Sigmoid colon (tissue), 7 donors: ENCODE measurements at regions of chr22 and their contacts with region 1.

Region 1: DNA sequence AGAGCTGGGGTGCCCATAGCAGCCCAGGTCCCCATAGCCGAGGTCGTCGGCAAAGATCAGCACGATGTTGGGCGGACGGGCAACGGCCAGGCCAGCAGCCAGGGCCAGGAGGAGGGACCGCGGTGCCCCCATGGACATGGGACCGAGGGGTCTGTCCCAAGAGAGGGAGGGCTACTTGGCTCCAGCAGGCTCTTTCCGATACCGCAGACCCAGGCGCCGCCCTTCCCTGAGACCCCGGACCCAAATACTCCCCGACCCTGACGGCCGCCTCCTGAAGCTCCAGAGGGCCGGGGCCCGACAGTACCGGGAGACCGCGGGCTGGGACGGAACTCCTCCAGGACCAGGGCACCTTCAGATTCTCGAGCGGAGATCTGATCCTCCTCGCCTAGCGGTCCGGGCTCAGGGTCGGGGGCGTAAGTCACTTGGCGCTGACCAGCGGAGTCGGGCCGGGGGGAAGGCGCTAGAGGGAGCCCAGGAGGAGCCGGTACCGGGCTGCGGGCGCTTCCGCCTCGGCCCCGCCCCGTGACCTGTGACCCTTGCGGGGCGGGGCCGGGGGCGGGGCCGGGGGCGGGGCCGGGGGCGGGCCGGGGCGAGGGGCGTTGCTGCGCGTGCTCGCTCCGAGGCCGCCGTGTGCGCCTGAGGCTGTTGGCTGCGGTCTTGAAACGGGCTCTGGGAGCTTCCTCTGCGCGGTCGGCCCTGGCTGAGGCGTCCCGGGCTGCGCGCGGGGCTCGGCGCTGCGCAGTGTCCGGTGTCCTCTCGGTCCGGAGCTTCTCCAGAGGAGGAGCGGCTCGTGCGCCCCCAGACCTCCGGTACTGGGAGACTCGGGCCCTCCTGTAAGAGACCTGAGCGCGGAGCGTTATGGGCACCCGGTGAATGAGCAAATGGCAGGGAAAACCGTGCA is at the start of gene ARSA:
- DNase-seq: peak; percentile 92
- H3K4me3 ChIP-seq: peak within 1 kb of the TSS; percentile 57 to 81 (median 76)
- H3K27ac ChIP-seq: peak within 1 kb of the TSS; percentile 76 to 84 (median 82)
- H3K4me1 ChIP-seq: peaks cover 0 to 20% (median 15%) of the 10 kb centered on the region in 4 donors
- H3K27me3 ChIP-seq: no peaks in the 10 kb centered on the region
- CTCF ChIP-seq: peak in 1 of 4 experiments; percentile 11
- EP300 ChIP-seq: no peak
- POLR2A ChIP-seq: peak in 1 of 2 donors; percentile 11
- total RNA-seq, gene ARSA: 19.3 to 26.3 (median 23.8) TPM

Region 2: GRCh38 chr22:50244420-50245213 is 383.3 kb before region 1 on chr22 and contains the start of gene TUBGCP6:
- intact Hi-C with region 1: loop called (anchors 5 kb)
- DNase-seq: peak; percentile 98
- H3K4me3 ChIP-seq: peak within 1 kb of the TSS; percentile 84 to 94 (median 89)
- H3K27ac ChIP-seq: peak within 1 kb of the TSS; percentile 92 to 97 (median 96)
- H3K4me1 ChIP-seq: peaks cover 3 to 67% (median 46%) of the 10 kb centered on the region in 4 donors
- H3K27me3 ChIP-seq: no peaks in the 10 kb centered on the region
- CTCF ChIP-seq: peak in 3 of 4 experiments; percentile 18 to 29 (median 21)
- EP300 ChIP-seq: peak in 1 of 4 donors; percentile 73
- POLR2A ChIP-seq: peak; percentile 83 to 87
- total RNA-seq, gene TUBGCP6: 23.5 to 67.0 (median 28.2) TPM

Region 3: DNA sequence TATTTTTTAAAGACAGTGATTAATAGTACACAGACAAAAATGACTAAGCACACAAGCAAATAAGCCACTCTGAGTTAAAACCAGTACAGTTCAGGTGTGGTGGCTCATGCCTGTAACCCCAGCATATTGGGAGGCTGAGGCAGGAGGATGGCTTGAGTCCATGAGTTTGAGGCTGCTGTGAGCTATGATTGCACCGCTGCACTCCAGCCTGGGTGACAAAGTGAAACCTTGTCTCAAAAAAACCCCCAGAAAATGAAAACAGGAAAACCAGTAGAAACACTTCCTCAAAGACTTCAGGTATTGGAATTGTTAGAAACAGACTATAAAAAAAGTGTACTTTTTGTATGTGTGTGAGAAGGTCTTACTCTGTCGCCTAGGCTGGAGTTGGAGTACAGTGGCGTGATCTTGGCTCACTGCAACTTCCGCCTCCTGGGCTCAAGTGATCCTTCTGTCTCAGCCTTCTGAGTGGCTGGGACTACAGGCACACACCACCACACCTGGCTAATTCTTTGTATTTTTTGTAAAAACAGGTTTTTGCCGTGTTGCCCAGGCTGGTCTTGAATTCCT is 251.7 kb before region 1 on chr22:
- intact Hi-C with region 1: no loop called
- DNase-seq: no peak
- H3K4me3 ChIP-seq: no peak overlapping the region
- H3K27ac ChIP-seq: no peak overlapping the region
- H3K4me1 ChIP-seq: no peaks in the 10 kb centered on the region
- H3K27me3 ChIP-seq: no peaks in the 10 kb centered on the region
- CTCF ChIP-seq: no peak
- EP300 ChIP-seq: no peak
- POLR2A ChIP-seq: no peak

Region 4: DNA sequence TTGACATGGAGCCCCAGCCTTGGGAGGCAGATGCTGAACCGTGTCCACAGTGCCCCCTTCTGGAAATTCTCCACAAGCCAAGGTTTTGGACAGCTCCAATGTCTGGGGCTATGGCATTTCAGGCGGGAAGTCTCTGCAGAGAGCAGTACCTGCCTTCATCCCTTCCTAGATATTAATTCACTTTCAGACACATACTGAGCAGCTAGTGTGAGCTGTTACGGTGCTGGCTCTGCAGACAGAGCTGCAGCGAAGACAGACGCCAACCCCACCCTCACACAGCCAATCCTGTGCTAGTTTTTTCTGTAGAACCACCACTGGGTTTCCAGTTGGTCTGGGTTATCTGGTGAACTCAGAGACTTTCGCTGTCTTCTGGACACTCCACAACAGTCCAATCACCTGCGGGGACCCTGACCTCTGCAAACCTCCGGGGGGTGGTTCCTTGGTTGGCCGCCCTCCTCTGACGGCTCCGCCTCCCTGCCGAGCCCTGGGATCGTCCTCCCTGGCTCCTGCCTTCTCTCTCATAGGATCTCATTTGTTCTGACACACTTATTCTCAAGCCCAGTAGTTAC is 129.5 kb before region 1 on chr22:
- intact Hi-C with region 1: no loop called
- DNase-seq: no peak
- H3K4me3 ChIP-seq: no peak overlapping the region
- H3K27ac ChIP-seq: no peak overlapping the region
- H3K4me1 ChIP-seq: peaks cover 0 to 8% (median 0%) of the 10 kb centered on the region in 4 donors
- H3K27me3 ChIP-seq: no peaks in the 10 kb centered on the region
- CTCF ChIP-seq: peak in 3 of 4 experiments; percentile 17 to 28 (median 24)
- EP300 ChIP-seq: no peak
- POLR2A ChIP-seq: no peak

Region 5: DNA sequence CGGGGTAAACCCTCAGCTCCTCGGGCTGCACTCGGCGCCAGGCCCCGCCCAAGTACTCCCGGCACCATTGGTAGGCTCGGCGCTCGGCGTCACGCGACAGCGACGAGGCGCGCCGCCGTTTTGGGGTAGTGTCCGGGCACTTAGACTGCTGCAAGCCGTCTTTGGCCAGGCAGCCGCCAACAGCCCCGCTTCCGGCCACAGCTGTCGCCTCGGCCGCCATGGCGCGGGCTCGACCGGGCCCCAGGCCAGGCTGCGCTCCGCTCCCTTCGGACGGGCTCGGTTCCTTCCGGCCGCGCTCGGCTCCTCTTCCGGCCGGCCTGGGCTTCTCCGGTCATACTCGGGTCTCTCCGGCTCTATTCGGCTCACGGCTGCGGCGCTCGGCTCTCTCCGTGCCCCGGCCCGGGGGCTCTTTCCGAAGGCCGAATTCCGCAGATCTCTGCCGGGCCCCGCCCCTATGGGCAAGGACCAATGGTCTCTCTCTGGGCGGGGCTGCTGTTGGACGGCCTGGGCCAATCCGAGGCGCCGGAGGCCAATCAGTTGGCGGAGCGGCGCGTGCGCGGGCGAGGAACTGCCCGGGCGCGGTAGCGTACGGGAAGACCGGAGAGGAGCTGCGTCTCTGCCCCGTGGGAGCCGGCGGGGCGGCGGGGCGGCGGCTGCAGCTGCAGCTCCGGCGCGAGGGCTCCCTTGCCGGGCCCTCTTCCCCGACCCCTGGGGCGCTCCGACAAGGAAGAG is 45.2 kb before region 1 on chr22 and contains the start of gene CHKB:
- intact Hi-C with region 1: loop called (anchors 5 kb)
- DNase-seq: peak; percentile 99
- H3K4me3 ChIP-seq: peak within 1 kb of the TSS; percentile 85 to 92 (median 89)
- H3K27ac ChIP-seq: peak within 1 kb of the TSS; percentile 97 to 99 (median 98)
- H3K4me1 ChIP-seq: peaks cover 0 to 35% (median 32%) of the 10 kb centered on the region in 4 donors
- H3K27me3 ChIP-seq: peaks cover 9 to 12% (median 11%) of the 10 kb centered on the region in 3 donors
- CTCF ChIP-seq: no peak
- EP300 ChIP-seq: no peak
- POLR2A ChIP-seq: peak; percentile 48 to 63
- total RNA-seq, gene CHKB: 22.0 to 55.1 (median 39.2) TPM

Region 6: GRCh38 chr22:50657925-50658324 is 30.0 kb after region 1 on chr22:
- intact Hi-C with region 1: no loop called
- DNase-seq: no peak
- H3K4me3 ChIP-seq: no peak overlapping the region
- H3K27ac ChIP-seq: no peak overlapping the region
- H3K4me1 ChIP-seq: no peaks in the 10 kb centered on the region
- H3K27me3 ChIP-seq: peaks cover 0 to 43% (median 0%) of the 10 kb centered on the region in 3 donors
- CTCF ChIP-seq: no peak
- EP300 ChIP-seq: no peak
- POLR2A ChIP-seq: no peak

Region 7: GRCh38 chr22:50696797-50697561 is 69.1 kb after region 1 on chr22:
- intact Hi-C with region 1: loop called (anchors 5 kb)
- DNase-seq: peak; percentile 64
- H3K4me3 ChIP-seq: peak overlapping the region; percentile 45 to 63 (median 52)
- H3K27ac ChIP-seq: peak overlapping the region in 1 of 4 donors; percentile 18
- H3K4me1 ChIP-seq: peaks cover 0 to 17% (median 14%) of the 10 kb centered on the region in 4 donors
- H3K27me3 ChIP-seq: peaks cover 0 to 7% (median 0%) of the 10 kb centered on the region in 3 donors
- CTCF ChIP-seq: peak in 2 of 4 experiments; percentile 28 to 32
- EP300 ChIP-seq: no peak
- POLR2A ChIP-seq: no peak